Activated CD4-positive, alpha-beta T cell treated with anti-CD3 and anti-CD28 coated beads, Interleukin-2, amount 10 ng/mL, durations not matched to agents 24 days and 14 days (primary cell): ENCODE measurements at regions of chr10 and their contacts with region 1.

Region 1: DNA sequence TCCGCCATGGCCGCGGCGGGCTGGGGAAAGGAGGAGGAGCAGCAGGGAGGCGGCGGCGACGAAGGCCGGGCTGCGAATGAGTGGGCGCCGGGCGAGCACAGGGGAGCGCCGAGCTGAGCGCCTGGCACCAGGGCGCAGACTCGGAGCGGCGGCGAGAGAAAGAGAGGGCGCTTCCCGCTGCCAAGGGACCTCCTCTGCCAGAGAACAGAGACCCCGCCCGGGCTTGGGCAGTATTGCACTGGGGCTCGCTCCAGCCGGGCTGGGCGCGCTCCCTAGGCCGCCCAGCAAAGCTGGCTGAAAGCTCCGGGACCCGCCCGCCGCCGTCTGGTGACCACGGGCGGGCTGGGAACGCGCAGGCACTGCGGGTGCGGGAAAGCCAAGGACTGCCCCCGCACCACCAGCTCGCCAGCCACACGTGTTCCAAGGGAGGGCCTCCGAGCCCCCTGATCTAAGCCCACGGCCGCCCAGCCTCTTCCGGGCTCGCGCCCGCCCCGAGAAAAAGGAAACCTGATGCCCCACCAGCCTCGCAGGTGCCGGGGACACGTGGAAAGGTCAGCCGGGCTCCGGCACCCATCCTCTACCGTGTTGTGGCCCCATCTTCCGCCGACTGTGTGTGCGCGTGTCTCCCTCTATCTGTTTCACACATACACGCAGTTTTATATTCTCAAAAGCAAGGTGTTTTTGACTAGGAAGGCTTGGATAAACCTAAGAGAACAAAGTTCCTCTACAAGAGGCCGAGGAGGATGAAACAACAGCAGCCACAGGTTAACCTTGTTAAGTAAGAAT is at the start of gene CCDC6:
- DNase-seq: peak; percentile 97
- H3K4me3 Mint-ChIP-seq: peak within 1 kb of the TSS; percentile 99
- H3K27ac Mint-ChIP-seq: peak within 1 kb of the TSS; percentile 99
- H3K4me1 Mint-ChIP-seq: peaks cover 51% of the 10 kb centered on the region
- H3K27me3 Mint-ChIP-seq: no peaks in the 10 kb centered on the region
- total RNA-seq, gene CCDC6: 83.2 and 85.1 TPM in 2 replicates

Region 2: GRCh38 chr10:59625721-59626522 is 280.7 kb before region 1 on chr10:
- intact Hi-C with region 1: loop called (anchors 2 kb)
- DNase-seq: peak; percentile 86
- H3K4me3 Mint-ChIP-seq: no peak overlapping the region
- H3K27ac Mint-ChIP-seq: no peak overlapping the region
- H3K4me1 Mint-ChIP-seq: peaks cover 2% of the 10 kb centered on the region
- H3K27me3 Mint-ChIP-seq: peaks cover 8% of the 10 kb centered on the region

Region 3: GRCh38 chr10:59830601-59831259 is 75.9 kb before region 1 on chr10:
- intact Hi-C with region 1: loop called (anchors 1 kb)
- DNase-seq: peak; percentile 75
- H3K4me3 Mint-ChIP-seq: no peak overlapping the region
- H3K27ac Mint-ChIP-seq: no peak overlapping the region
- H3K4me1 Mint-ChIP-seq: peaks cover 39% of the 10 kb centered on the region
- H3K27me3 Mint-ChIP-seq: no peaks in the 10 kb centered on the region

Region 4: GRCh38 chr10:59887972-59888663 is 18.5 kb before region 1 on chr10:
- intact Hi-C with region 1: loop called (anchors 1 kb)
- DNase-seq: no peak
- H3K4me3 Mint-ChIP-seq: peak overlapping the region; percentile 51
- H3K27ac Mint-ChIP-seq: peak overlapping the region; percentile 70
- H3K4me1 Mint-ChIP-seq: peaks cover 80% of the 10 kb centered on the region
- H3K27me3 Mint-ChIP-seq: no peaks in the 10 kb centered on the region

Region 5: DNA sequence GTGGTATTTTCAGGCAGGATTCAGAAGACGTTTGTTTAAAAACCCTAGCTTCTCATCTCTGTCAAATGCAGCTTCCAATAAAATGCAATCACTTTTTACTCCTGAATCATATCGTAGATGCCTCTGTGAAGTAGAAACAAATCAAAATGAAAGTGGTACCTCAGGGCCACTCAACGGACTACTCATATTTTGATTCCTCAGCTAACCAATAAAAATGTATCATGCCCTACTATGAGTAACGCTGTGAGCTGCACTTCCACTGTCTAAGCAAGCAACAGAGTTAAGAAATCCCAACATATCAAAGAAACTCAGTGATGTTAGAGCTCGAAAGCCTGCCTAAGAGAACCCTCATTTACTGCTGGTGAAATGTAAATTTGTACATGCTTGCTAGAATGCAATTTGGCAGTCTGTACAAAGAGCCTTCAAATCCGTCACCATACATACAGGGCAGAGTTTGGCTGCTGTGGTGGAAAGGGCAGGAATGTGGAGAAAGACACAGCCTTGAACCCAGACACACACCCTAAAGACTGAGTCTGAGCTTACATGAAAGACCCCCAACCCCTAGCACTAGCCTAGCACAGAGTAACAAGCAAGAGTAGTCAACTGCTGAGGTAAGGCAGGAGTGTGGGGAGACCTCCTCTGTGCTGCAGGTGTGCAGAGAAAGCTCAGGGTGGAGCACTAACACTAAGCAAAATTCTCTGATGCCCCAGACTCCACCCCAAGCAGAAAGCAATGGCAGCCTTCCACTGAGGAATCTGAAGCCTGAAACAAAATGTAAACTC is 331.6 kb after region 1 on chr10:
- intact Hi-C with region 1: loop called (anchors 10 kb)
- DNase-seq: peak; percentile 68
- H3K4me3 Mint-ChIP-seq: peak overlapping the region; percentile 73
- H3K27ac Mint-ChIP-seq: peak overlapping the region; percentile 67
- H3K4me1 Mint-ChIP-seq: peaks cover 24% of the 10 kb centered on the region
- H3K27me3 Mint-ChIP-seq: no peaks in the 10 kb centered on the region